Ascending aorta (tissue), 2 donors: ENCODE measurements at regions of chr1 and their contacts with region 1.

Region 1: GRCh38 chr1:184973272-184974055 is 844 bp downstream of the NIBAN1 start:
- DNase-seq: peak in 1 of 2 donors; percentile 81
- H3K4me3 ChIP-seq: peak overlapping the region; percentile 78 to 100
- H3K27ac ChIP-seq: peak overlapping the region; percentile 91 to 99
- H3K4me1 ChIP-seq: peaks cover 0 to 8% of the 10 kb centered on the region in 2 donors
- H3K27me3 ChIP-seq: no peaks in the 10 kb centered on the region
- CTCF ChIP-seq: no peak

Region 2: GRCh38 chr1:184827600-184828368 is 145.7 kb before region 1 on chr1:
- intact Hi-C with region 1: loop called (anchors 5 kb)
- DNase-seq: peak in 1 of 2 donors; percentile 73
- H3K4me3 ChIP-seq: no peak overlapping the region
- H3K27ac ChIP-seq: peak overlapping the region; percentile 85 to 88
- H3K4me1 ChIP-seq: peaks cover 6 to 71% of the 10 kb centered on the region in 2 donors
- H3K27me3 ChIP-seq: no peaks in the 10 kb centered on the region
- CTCF ChIP-seq: no peak

Region 3: DNA sequence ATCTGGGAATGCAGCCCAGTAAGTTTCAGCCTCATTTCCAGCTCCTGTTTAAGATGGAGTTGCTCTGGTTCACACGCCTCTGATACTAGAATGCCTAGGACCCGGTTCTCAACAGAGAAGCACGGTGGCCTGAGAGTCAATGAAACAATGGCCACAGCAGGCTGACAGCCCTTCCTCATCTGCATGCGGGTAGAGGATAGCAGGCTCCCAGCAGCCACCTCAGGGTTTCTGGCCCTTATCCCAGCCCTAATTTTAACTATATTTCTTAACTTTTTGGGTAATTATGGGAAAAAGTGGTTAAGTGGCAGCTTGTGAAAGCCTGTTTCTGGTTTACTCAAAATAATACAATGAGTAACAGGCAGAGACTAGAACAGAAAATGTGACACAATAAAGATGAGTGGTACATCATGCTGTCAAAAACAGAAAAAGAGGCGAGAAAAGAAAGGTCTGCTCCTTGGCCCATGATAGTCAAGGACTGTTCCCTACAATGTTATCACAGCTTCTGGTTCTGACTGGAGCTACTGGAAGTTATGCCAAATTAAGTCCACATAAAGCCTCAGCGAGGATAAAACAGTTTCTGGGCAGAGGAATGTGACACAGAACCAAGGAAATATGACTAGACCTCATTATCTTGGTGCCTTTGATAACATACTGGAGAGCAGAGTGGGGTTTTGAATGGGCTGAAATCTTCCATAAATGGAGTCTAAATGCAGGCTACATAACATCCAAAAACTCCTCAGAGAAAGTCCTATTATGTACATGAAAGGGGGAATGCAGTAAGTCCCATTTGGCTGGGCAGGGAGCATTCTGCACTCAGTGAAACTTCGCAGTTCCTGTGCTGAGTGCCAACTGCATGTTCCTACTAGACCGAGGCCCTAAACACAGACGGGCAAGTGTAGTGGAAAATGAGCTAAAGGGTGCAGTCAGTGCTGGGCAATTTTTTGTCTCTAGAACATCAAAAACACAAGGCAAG is 91.2 kb before region 1 on chr1:
- intact Hi-C with region 1: loop called (anchors 2 kb)
- DNase-seq: peak; percentile 45 to 89
- H3K4me3 ChIP-seq: peak overlapping the region in 1 of 2 donors; percentile 7
- H3K27ac ChIP-seq: peak overlapping the region; percentile 86 to 93
- H3K4me1 ChIP-seq: peaks cover 8 to 75% of the 10 kb centered on the region in 2 donors
- H3K27me3 ChIP-seq: no peaks in the 10 kb centered on the region
- CTCF ChIP-seq: no peak

Region 4: DNA sequence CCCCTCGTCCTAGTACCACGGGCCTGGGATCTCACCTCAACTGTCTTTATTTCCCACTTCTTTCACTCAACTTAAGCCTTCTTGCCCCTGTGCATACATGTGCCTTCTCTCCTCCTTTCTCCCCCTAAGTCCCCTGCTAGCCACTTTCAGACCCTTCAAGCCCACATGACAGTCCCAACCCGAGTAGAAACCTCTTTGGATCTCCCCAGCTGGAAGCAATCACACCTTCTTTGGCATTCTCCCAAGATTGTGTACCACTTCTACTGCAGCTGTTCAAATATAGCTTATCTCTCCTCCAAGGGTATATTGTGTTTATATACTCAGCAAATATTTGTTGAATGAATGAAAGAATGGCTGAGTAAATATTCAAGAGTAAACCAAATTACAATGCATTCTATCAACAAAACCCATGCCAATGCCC is 68.0 kb before region 1 on chr1:
- intact Hi-C with region 1: no loop called
- DNase-seq: no peak
- H3K4me3 ChIP-seq: no peak overlapping the region
- H3K27ac ChIP-seq: peak overlapping the region; percentile 35 to 66
- H3K4me1 ChIP-seq: peaks cover 0 to 64% of the 10 kb centered on the region in 2 donors
- H3K27me3 ChIP-seq: no peaks in the 10 kb centered on the region
- CTCF ChIP-seq: no peak

Region 5: DNA sequence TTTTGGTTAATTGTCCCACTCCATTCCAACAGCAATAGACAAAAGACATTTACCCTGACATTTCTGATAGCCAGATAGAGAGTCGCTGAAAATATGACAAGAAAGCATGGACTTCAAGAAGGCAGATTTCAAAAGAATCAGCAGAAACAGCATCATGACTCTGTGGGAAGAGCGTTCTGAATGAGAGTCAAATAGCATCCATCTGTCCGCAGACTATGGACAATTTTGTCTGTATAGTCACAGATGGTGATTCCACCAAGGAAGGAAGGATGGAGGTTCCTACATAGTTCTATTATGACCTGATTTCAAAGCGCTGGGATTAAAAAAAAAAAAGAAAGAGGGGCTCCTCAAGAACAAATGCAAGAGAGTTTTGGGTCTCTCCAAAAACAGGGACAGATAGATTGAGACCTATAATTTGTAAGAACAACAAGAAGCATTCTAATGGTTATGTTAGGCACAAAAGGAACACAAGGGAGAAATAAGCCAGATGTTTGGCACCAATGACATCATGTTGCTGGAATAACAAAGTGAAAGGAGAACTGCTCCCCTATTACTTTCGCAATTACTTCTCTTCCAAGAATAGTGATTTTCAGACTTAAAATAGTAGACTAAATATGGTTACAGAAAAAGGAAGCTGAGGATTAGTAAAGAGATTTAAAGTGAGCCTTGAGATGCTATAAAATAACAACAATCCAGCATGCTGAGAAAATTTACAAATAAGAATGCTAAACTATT is 27.6 kb before region 1 on chr1:
- intact Hi-C with region 1: loop called (anchors 2 kb)
- DNase-seq: no peak
- H3K4me3 ChIP-seq: peak overlapping the region in 1 of 2 donors; percentile 20
- H3K27ac ChIP-seq: peak overlapping the region; percentile 82 to 83
- H3K4me1 ChIP-seq: peaks cover 0 to 41% of the 10 kb centered on the region in 2 donors
- H3K27me3 ChIP-seq: no peaks in the 10 kb centered on the region
- CTCF ChIP-seq: no peak

Region 6: DNA sequence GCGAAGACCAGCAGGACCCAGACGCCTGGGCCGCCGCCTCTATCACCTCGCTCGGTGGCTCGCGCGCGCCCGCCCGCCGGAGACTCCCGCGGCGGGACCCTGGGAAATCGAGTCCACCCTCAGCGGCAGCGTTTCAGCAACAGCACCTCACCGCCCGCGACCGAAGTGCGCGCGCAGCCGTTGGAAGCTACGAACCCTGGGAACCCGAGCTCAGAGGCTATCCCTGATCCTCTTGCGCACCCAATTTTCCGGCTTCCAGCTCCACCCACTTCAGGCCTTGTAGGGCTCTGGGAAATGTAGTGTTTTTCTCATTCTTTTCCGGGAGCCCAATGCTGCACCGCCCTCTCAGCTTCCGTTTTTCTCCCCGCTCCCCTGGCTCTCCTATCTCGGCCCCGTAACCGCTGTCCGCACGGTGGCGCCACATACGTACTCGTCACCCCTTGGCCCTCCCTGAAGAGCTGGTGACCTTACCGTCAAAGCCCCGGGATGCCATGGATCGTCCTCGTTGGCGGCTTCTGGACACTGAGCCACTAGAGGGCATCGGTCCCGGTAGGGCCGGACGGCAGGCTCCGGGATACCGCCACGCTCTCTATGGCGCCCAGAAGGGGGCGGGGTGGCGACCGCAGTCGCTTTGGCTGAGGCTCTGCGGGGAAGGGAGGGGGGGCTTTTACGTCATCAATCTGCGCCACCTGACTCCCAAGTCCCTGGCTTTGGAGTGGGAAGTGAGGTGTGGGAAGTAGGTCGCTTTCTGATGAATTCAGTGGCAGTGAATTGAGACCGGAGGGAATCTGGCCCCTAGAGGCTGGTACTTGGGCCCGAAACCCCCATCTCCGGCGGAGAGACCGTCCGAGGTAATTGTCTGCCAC is 1401.9 kb after region 1 on chr1 and contains the starts of genes ODR4 and TPR:
- intact Hi-C with region 1: loop called (anchors 5 kb)
- DNase-seq: peak; percentile 94 to 99
- H3K4me3 ChIP-seq: peak within 1 kb of the TSS; percentile 74 to 94
- H3K27ac ChIP-seq: peak within 1 kb of the TSS; percentile 98 to 99
- H3K4me1 ChIP-seq: peaks cover 6 to 16% of the 10 kb centered on the region in 2 donors
- H3K27me3 ChIP-seq: no peaks in the 10 kb centered on the region
- CTCF ChIP-seq: peak; percentile 90 to 92 (median 91)
- total RNA-seq, gene ODR4: 5.5 TPM
- total RNA-seq, gene TPR: 35.7 TPM